ENCODE measurements at regions of chr14 and their contacts with region 1.

Region 1: DNA sequence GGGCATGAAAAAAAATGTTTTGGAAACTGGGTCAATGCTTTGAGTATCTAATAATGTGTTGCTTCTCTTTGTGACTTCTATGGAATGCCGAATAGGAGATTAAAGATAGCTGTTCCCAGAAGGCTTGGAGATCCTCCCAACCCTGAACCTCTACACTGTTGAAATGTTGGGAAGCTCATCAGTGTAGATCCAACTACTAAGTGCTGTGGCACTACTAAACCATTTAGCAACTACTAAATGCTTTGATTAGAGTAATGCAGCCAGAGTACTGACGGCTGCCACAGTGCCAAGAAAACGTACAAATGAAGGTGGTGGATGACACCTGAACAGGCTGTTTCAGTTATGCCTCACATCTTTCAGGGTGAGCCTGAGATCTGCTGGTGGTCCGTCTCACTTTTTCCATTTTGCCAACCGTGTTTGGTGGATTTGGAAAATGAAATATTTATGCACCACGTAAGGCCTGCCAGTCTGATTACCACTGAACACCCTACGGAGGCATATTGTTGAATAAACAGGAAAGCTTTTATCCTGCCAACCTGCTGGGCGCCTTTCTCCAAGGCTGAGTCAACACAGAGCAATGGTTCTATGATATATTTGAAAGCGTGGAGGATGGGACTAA is 938.0 kb upstream of the FLRT2 start:
- DNase-seq: peak; percentile 96
- H3K4me3 ChIP-seq: no peak overlapping the region
- H3K27ac ChIP-seq: peak overlapping the region; percentile 69
- H3K4me1 ChIP-seq: peaks cover 36% of the 10 kb centered on the region
- H3K27me3 ChIP-seq: no peaks in the 10 kb centered on the region
- CTCF ChIP-seq: no peak

Region 2: DNA sequence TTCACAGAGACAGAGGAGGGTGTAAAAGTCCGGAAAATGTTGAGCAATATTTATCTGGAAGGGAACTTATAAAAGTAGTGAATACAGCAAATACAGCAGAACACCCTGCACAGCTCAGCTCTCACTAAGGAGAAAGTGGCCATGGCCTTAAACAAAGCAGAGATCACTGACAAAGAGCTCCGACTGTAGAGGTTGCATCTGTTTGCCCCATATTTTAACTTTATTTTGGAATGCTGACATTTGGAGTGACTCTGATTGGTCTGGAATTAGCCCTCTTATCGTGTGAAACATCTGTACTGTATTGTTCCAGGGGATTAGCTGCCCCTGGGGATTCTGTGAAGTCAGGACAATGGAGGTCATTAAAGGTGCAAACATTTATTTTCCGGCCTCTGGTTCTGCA is 337.6 kb before region 1 on chr14:
- CTCF ChIA-PET with region 1: no interaction called
- POLR2A ChIA-PET with region 1: no interaction called
- intact Hi-C with region 1: loop called (anchors 10 kb)
- DNase-seq: peak; percentile 72
- H3K4me3 ChIP-seq: no peak overlapping the region
- H3K27ac ChIP-seq: peak overlapping the region; percentile 27
- H3K4me1 ChIP-seq: peaks cover 52% of the 10 kb centered on the region
- H3K27me3 ChIP-seq: no peaks in the 10 kb centered on the region
- CTCF ChIP-seq: no peak

Region 3: GRCh38 chr14:84806627-84807026 is 214.7 kb after region 1 on chr14:
- CTCF ChIA-PET with region 1: no interaction called
- POLR2A ChIA-PET with region 1: no interaction called
- intact Hi-C with region 1: loop called (anchors 10 kb)
- DNase-seq: no peak
- H3K4me3 ChIP-seq: no peak overlapping the region
- H3K27ac ChIP-seq: peak overlapping the region; percentile 9
- H3K4me1 ChIP-seq: peaks cover 26% of the 10 kb centered on the region
- H3K27me3 ChIP-seq: no peaks in the 10 kb centered on the region
- CTCF ChIP-seq: no peak

Region 4: GRCh38 chr14:84961637-84962036 is 369.7 kb after region 1 on chr14:
- CTCF ChIA-PET with region 1: no interaction called
- POLR2A ChIA-PET with region 1: no interaction called
- intact Hi-C with region 1: no loop called
- DNase-seq: no peak
- H3K4me3 ChIP-seq: no peak overlapping the region
- H3K27ac ChIP-seq: no peak overlapping the region
- H3K4me1 ChIP-seq: peaks cover 27% of the 10 kb centered on the region
- H3K27me3 ChIP-seq: no peaks in the 10 kb centered on the region
- CTCF ChIP-seq: no peak

Measured in A673 (cell line).